Adrenal gland (tissue), 19 donors: ENCODE measurements at regions of chr7 and their contacts with region 1.

Region 1: GRCh38 chr7:148503875-148504487 is 86.6 kb upstream of the C7orf33 start:
- DNase-seq: no peak
- H3K4me3 ChIP-seq: no peak overlapping the region
- H3K27ac ChIP-seq: no peak overlapping the region
- H3K4me1 ChIP-seq: no peaks in the 10 kb centered on the region
- H3K27me3 ChIP-seq: peaks cover 7% of the 10 kb centered on the region
- CTCF ChIP-seq: peak; percentile 64 to 85 (median 78)
- POLR2A ChIP-seq: no peak

Region 2: DNA sequence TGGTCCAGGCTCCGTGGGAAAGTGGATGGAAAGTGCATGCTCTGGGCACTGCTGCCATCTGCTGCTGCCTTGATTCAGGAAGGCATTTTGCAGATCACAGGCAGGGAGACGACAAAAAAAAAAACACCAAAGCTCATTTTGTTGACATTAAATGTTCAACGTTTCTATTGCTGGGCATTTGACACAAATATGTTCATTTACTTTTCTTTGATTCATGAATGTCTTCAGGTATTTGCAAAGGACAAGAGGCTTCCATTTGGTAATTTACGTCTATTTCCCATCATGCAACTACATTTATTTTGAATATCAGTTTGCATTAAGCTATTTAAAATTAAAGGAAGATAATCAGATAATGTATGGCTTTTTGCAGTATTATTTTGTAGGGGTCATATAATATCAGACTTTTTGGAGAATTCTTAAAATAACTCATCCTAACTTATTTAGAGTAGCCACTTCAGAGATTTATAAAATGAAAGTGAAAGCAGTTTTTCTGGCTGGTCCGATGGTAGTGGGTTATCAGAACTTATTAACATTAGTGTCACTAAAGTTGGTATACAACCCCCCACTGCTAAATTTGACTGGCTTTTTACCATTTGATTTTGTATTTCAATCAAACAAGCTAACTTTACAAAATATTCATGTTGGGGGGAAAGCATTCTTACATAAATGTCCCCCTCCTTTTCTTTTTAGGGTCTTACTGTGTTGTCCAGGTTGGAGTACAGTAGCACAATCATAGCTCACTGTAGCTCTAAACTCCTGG is 459.0 kb after region 1 on chr7:
- intact Hi-C with region 1: loop called in 1 of 2 experiments (anchors 5 kb)
- DNase-seq: peak; percentile 66 to 88 (median 74)
- H3K4me3 ChIP-seq: peak overlapping the region in 3 of 4 donors; percentile 13 to 61 (median 53)
- H3K27ac ChIP-seq: peak overlapping the region in 4 of 5 donors; percentile 18 to 56 (median 32)
- H3K4me1 ChIP-seq: no peaks in the 10 kb centered on the region
- H3K27me3 ChIP-seq: no peaks in the 10 kb centered on the region
- CTCF ChIP-seq: peak; percentile 27 to 95 (median 68)
- POLR2A ChIP-seq: no peak